CD8-positive, alpha-beta T cell (primary cell): ENCODE measurements at regions of chr6 and their contacts with region 1.

Region 1: GRCh38 chr6:144095331-144096002 is at the start of gene SF3B5:
- DNase-seq: peak; percentile 94 to 100 (median 97)
- ATAC-seq: peak; percentile 96
- H3K4me3 ChIP-seq: peak within 1 kb of the TSS; percentile 79 to 91
- H3K4me3 Mint-ChIP-seq: peak within 1 kb of the TSS; percentile 97
- H3K27ac ChIP-seq: peak within 1 kb of the TSS; percentile 91 to 94
- H3K27ac Mint-ChIP-seq: peak within 1 kb of the TSS; percentile 98
- H3K4me1 ChIP-seq: peaks cover 18% of the 10 kb centered on the region
- H3K4me1 Mint-ChIP-seq: peaks cover 25% of the 10 kb centered on the region
- H3K27me3 ChIP-seq: no peaks in the 10 kb centered on the region
- H3K27me3 Mint-ChIP-seq: no peaks in the 10 kb centered on the region
- CTCF ChIP-seq: no peak
- total RNA-seq, gene SF3B5: 167 to 171 TPM

Region 2: GRCh38 chr6:142146828-142147662 is 1948.4 kb before region 1 on chr6 and contains the starts of genes NMBR and VTA1:
- CTCF ChIA-PET with region 1: no interaction called
- POLR2A ChIA-PET with region 1: no interaction called
- intact Hi-C with region 1: loop called (anchors 10 kb)
- DNase-seq: peak; percentile 89 to 100 (median 95)
- ATAC-seq: peak; percentile 95
- H3K4me3 ChIP-seq: peak within 1 kb of the TSS; percentile 93 to 100
- H3K4me3 Mint-ChIP-seq: peak within 1 kb of the TSS; percentile 91
- H3K27ac ChIP-seq: peak within 1 kb of the TSS; percentile 79 to 82
- H3K27ac Mint-ChIP-seq: peak within 1 kb of the TSS; percentile 87
- H3K4me1 ChIP-seq: peaks cover 31% of the 10 kb centered on the region
- H3K4me1 Mint-ChIP-seq: peaks cover 64% of the 10 kb centered on the region
- H3K27me3 ChIP-seq: no peaks in the 10 kb centered on the region
- H3K27me3 Mint-ChIP-seq: no peaks in the 10 kb centered on the region
- CTCF ChIP-seq: peak; percentile 87
- total RNA-seq, gene NMBR: not detected
- total RNA-seq, gene VTA1: 20.7 to 24.6 TPM

Region 3: GRCh38 chr6:143575440-143575839 is 520.0 kb before region 1 on chr6:
- CTCF ChIA-PET with region 1: no interaction called
- POLR2A ChIA-PET with region 1: no interaction called
- intact Hi-C with region 1: loop called (anchors 2 to 10 kb)
- DNase-seq: peak; percentile 12 to 81 (median 46)
- ATAC-seq: peak; percentile 99
- H3K4me3 ChIP-seq: no peak overlapping the region
- H3K4me3 Mint-ChIP-seq: no peak overlapping the region
- H3K27ac ChIP-seq: no peak overlapping the region
- H3K27ac Mint-ChIP-seq: no peak overlapping the region
- H3K4me1 ChIP-seq: no peaks in the 10 kb centered on the region
- H3K4me1 Mint-ChIP-seq: no peaks in the 10 kb centered on the region
- H3K27me3 ChIP-seq: no peaks in the 10 kb centered on the region
- H3K27me3 Mint-ChIP-seq: no peaks in the 10 kb centered on the region
- CTCF ChIP-seq: peak; percentile 93

Region 4: DNA sequence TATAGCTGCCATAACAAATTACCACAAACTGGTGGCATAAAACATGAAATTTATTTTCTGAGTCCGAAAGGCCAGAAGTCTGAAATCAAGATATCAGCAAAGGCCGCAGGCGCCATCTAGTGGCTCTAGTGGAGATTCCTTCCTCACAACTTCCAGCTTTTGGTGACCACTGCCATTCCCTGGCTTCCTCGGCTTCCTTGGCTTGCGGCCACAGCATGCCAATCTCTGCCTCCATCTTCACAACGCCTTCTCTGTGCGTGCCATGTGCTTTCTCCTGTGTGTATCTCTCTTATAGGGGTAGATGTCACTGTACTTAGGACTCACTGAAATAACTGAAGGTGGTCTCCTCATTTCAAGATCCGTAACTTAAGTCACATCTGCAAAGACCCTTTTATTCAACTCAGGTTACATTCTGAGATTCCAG is 82.0 kb before region 1 on chr6:
- CTCF ChIA-PET with region 1: no interaction called
- POLR2A ChIA-PET with region 1: interaction called, 3 read pairs
- intact Hi-C with region 1: loop called in 1 of 2 experiments (anchors 10 kb)
- DNase-seq: peak; percentile 16 to 74 (median 63)
- ATAC-seq: no peak
- H3K4me3 ChIP-seq: no peak overlapping the region
- H3K4me3 Mint-ChIP-seq: no peak overlapping the region
- H3K27ac ChIP-seq: no peak overlapping the region
- H3K27ac Mint-ChIP-seq: no peak overlapping the region
- H3K4me1 ChIP-seq: no peaks in the 10 kb centered on the region
- H3K4me1 Mint-ChIP-seq: peaks cover 4% of the 10 kb centered on the region
- H3K27me3 ChIP-seq: no peaks in the 10 kb centered on the region
- H3K27me3 Mint-ChIP-seq: peaks cover 3% of the 10 kb centered on the region
- CTCF ChIP-seq: peak; percentile 90

Region 5: DNA sequence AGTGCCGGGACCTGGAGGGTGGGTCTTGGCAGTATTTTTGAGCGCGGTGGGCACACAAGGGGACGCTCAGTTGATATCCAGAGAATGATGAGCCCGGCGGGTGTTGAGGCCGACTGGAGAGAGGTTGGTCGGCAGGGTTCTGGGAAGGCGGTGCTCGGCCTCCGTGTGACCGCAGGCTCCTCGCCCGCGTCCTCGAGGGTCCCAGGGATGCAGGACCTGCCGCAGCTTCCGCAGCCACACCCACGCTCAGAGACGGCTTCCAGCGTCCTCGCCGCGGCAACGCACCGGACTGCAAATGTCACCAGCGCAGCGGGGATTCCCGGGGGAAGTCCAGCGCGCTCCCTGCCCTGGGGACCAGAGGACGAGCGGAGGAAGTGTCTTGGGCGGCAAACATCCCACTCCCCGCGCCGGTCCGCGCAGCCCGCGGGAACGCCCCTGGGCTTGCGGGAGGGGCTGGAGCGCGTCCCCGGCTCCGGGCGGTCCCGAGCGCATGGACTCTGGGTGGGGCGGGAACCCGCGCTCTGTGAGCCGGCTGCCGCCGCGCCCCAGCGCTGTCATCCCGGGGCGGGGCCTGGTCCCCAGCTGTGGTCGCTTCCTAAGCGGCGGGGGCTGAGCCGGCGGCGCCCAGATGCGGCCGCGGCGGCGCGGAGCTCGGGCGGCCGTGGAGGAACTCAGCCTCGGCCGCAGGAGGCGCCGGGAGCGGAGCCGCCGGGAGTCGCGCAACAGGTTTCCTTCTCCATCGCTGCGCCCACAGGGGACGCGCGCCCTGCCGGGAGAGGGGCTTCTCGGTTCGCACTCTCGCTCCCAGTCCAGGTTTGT is 54.6 kb after region 1 on chr6 and contains the start of gene STX11:
- CTCF ChIA-PET with region 1: no interaction called
- POLR2A ChIA-PET with region 1: interaction called, 4 read pairs
- intact Hi-C with region 1: loop called (anchors 2 to 5 kb)
- DNase-seq: peak; percentile 27 to 89 (median 67)
- ATAC-seq: peak; percentile 56
- H3K4me3 ChIP-seq: peak within 1 kb of the TSS; percentile 68 to 71
- H3K4me3 Mint-ChIP-seq: peak within 1 kb of the TSS; percentile 94
- H3K27ac ChIP-seq: peak within 1 kb of the TSS; percentile 66 to 90
- H3K27ac Mint-ChIP-seq: peak within 1 kb of the TSS; percentile 95
- H3K4me1 ChIP-seq: peaks cover 5% of the 10 kb centered on the region
- H3K4me1 Mint-ChIP-seq: peaks cover 19% of the 10 kb centered on the region
- H3K27me3 ChIP-seq: no peaks in the 10 kb centered on the region
- H3K27me3 Mint-ChIP-seq: no peaks in the 10 kb centered on the region
- CTCF ChIP-seq: no peak
- total RNA-seq, gene STX11: 17.7 to 18.9 TPM

Region 6: GRCh38 chr6:144349690-144350527 is 254.4 kb after region 1 on chr6:
- CTCF ChIA-PET with region 1: no interaction called
- POLR2A ChIA-PET with region 1: no interaction called
- intact Hi-C with region 1: loop called in 1 of 2 experiments (anchors 5 kb)
- DNase-seq: peak in 2 of 9 experiments; percentile 52 to 67
- ATAC-seq: peak; percentile 53
- H3K4me3 ChIP-seq: peak overlapping the region; percentile 8 to 29
- H3K4me3 Mint-ChIP-seq: peak overlapping the region; percentile 74
- H3K27ac ChIP-seq: peak overlapping the region; percentile 40 to 88
- H3K27ac Mint-ChIP-seq: peak overlapping the region; percentile 93
- H3K4me1 ChIP-seq: peaks cover 81% of the 10 kb centered on the region
- H3K4me1 Mint-ChIP-seq: peaks cover 90% of the 10 kb centered on the region
- H3K27me3 ChIP-seq: no peaks in the 10 kb centered on the region
- H3K27me3 Mint-ChIP-seq: no peaks in the 10 kb centered on the region
- CTCF ChIP-seq: no peak

Region 7: DNA sequence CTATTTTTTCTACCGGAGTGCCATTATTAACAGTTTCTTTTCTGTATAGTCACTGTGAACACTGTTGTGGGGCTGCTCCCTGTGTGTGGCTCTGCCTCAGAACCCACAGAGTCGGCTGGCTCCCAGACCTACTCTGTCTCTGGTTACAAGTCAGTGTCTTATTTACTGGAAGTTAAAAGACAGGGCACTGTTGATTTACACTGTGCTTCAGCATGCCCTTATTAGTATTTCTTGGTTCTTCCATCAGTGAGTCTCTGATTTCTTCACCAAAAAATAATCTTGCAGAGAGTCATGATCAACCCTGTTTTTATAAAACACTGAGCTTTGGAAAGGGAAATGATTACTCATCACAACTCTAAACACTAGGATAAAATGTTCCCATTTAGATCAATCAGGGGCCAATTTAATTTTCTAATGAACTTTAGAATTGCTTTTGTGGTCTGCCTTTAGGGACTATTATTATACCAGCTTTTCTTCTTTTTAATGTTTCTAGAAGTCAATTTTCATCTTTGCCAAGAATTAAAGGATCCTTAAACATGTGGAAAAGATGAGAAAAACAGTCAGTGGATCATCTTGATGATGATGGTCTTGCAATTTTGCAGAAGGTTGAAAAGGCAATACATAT is 282.2 kb after region 1 on chr6:
- CTCF ChIA-PET with region 1: no interaction called
- POLR2A ChIA-PET with region 1: no interaction called
- intact Hi-C with region 1: no loop called
- DNase-seq: no peak
- ATAC-seq: peak; percentile 44
- H3K4me3 ChIP-seq: no peak overlapping the region
- H3K4me3 Mint-ChIP-seq: no peak overlapping the region
- H3K27ac ChIP-seq: no peak overlapping the region
- H3K27ac Mint-ChIP-seq: peak overlapping the region; percentile 6
- H3K4me1 ChIP-seq: peaks cover 18% of the 10 kb centered on the region
- H3K4me1 Mint-ChIP-seq: peaks cover 67% of the 10 kb centered on the region
- H3K27me3 ChIP-seq: no peaks in the 10 kb centered on the region
- H3K27me3 Mint-ChIP-seq: no peaks in the 10 kb centered on the region
- CTCF ChIP-seq: no peak

Region 8: GRCh38 chr6:145963216-145964068 is 1868.0 kb after region 1 on chr6:
- CTCF ChIA-PET with region 1: no interaction called
- POLR2A ChIA-PET with region 1: no interaction called
- intact Hi-C with region 1: loop called (anchors 2 to 5 kb)
- DNase-seq: peak in 8 of 9 experiments; percentile 19 to 63 (median 47)
- ATAC-seq: peak; percentile 22
- H3K4me3 ChIP-seq: peak overlapping the region; percentile 73 to 94
- H3K4me3 Mint-ChIP-seq: peak overlapping the region; percentile 98
- H3K27ac ChIP-seq: peak overlapping the region; percentile 79 to 82
- H3K27ac Mint-ChIP-seq: peak overlapping the region; percentile 99
- H3K4me1 ChIP-seq: peaks cover 28% of the 10 kb centered on the region
- H3K4me1 Mint-ChIP-seq: peaks cover 63% of the 10 kb centered on the region
- H3K27me3 ChIP-seq: no peaks in the 10 kb centered on the region
- H3K27me3 Mint-ChIP-seq: no peaks in the 10 kb centered on the region
- CTCF ChIP-seq: no peak